ENCODE measurements at regions of chr19 and their contacts with region 1.

Region 1: GRCh38 chr19:42244347-42245220 is 2.2 kb upstream of the GSK3A start:
- DNase-seq: peak; percentile 95
- ATAC-seq: peak; percentile 19
- H3K4me3 Mint-ChIP-seq: peak overlapping the region; percentile 89
- H3K27ac Mint-ChIP-seq: peak overlapping the region; percentile 97
- H3K4me1 Mint-ChIP-seq: peaks cover 35% of the 10 kb centered on the region
- H3K27me3 Mint-ChIP-seq: no peaks in the 10 kb centered on the region
- CTCF ChIP-seq: no peak

Region 2: DNA sequence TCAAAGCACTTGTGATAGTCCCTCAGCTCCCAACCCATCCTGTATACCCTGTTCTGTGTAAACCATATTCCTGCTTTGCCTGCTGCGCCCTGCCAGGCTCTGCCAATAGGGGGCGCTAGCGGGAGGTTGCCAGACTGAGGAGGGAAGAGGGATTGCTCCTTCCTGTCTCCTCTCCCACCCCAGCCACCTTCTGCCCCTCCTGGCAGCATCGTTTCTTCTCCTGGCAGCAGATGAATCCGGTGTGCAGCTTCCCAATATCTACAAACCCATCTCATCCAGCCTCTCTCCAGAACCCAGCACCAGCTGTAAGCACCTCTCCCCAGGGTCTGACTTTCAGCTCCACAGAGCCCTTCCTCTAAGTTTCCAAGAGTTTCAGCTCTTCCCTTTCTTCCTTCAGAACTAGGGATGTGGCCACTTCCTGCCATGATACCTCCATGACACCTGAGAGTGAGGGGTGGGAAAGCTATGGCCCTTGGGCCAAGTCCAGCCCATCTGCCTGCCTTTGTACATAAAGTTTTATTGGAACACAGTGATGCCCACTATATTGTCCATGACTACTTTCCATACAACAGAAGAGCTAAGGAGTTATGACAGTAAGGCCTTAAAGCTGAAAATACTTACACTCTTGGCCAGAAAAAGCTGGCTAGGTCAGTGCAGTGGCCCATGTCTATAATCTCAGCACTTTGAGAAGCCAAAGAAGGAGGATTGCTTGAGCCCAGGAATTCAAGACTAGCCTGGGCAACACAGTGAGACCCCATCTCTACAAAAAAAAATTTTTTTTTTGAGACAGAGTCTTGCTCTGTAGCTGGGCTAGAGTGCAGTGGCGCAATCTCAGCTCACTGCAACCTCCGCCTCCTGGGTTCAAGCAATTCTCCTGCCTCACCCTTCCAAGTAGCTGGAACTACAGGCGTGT is 216.0 kb before region 1 on chr19:
- CTCF ChIA-PET with region 1: no interaction called
- POLR2A ChIA-PET with region 1: no interaction called
- DNase-seq: peak; percentile 93
- ATAC-seq: peak; percentile 79
- H3K4me3 Mint-ChIP-seq: peak overlapping the region; percentile 62
- H3K27ac Mint-ChIP-seq: peak overlapping the region; percentile 17
- H3K4me1 Mint-ChIP-seq: peaks cover 39% of the 10 kb centered on the region
- H3K27me3 Mint-ChIP-seq: no peaks in the 10 kb centered on the region
- CTCF ChIP-seq: peak; percentile 98

Region 3: GRCh38 chr19:42254989-42255765 is 10.6 kb after region 1 on chr19 and contains the start of gene ERF:
- CTCF ChIA-PET with region 1: interaction called, 15 read pairs
- POLR2A ChIA-PET with region 1: interaction called, 13 read pairs
- DNase-seq: peak; percentile 88
- ATAC-seq: peak; percentile 58
- H3K4me3 Mint-ChIP-seq: peak within 1 kb of the TSS; percentile 82
- H3K27ac Mint-ChIP-seq: peak within 1 kb of the TSS; percentile 69; the same call in 1 of the 2 replicates
- H3K4me1 Mint-ChIP-seq: peaks cover 29% of the 10 kb centered on the region
- H3K27me3 Mint-ChIP-seq: peaks cover 20% of the 10 kb centered on the region
- CTCF ChIP-seq: no peak
- total RNA-seq, gene ERF: 65.4 to 67.6 TPM (median 65.9 TPM) in 3 replicates

Region 4: DNA sequence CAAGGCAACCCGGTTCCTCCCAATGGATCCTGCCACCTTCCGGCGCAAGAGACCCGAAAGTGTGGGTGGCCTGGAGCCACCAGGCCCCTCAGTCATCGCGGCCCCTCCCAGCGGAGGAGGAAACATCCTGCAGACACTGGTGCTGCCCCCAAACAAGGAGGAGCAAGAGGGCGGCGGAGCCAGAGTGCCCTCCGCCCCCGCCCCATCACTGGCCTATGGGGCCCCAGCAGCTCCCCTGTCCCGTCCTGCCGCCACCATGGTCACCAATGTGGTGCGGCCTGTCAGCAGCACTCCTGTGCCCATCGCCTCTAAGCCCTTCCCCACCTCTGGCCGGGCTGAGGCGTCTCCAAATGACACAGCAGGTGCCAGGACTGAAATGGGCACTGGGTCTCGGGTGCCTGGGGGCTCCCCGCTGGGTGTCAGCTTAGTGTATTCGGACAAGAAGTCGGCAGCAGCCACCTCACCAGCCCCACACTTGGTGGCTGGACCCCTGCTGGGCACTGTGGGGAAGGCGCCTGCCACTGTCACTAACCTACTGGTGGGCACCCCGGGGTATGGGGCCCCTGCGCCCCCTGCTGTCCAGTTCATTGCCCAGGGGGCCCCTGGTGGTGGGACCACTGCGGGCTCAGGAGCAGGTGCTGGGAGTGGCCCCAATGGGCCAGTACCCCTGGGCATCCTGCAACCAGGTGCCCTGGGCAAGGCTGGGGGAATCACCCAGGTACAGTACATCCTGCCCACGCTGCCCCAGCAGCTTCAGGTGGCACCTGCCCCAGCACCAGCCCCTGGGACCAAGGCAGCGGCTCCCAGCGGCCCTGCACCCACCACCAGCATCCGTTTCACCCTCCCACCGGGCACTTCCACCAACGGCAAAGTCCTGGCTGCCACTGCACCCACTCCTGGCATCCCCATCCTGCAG is 46.2 kb after region 1 on chr19:
- CTCF ChIA-PET with region 1: interaction called, 28 read pairs
- POLR2A ChIA-PET with region 1: interaction called, 3 read pairs
- DNase-seq: no peak
- ATAC-seq: no peak; the same call in 1 of the 2 replicates
- H3K4me3 Mint-ChIP-seq: no peak overlapping the region
- H3K27ac Mint-ChIP-seq: no peak overlapping the region
- H3K4me1 Mint-ChIP-seq: peaks cover 19% of the 10 kb centered on the region
- H3K27me3 Mint-ChIP-seq: no peaks in the 10 kb centered on the region
- CTCF ChIP-seq: peak; percentile 33; the same call in 1 of the 2 replicates

Region 5: DNA sequence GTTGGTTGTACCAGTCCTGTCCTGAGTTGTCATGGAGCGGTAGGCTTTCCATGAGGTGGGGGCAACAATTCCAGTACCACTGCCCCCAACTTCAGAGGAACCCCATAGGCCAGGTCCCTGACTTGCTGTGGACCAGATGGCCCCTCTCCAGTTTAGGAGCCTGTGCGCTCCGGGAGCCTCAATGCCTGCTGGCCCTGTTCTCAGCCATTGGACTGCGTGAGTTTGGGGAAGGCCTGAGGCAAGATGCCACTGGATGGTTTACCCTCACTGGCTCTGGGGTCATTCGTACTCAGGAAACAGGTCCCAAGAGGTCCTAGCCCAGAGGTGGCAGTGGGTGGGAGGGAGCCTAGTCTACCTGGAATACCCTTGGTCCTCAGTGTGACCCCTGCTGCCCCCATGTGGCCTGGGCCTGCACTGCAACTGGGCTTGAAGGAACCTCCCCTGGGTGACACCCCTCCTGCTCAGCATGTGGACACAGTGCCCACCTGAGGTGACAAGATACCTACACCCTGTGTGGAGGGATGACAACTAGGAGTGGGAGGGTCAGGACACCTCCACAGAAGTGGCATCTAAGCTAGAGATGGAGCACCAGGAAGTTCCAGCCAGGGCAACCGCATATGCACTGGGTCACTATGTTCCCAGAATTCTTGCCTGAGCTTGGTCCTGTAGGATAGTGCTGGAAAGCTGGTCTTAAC is 51.4 kb after region 1 on chr19:
- CTCF ChIA-PET with region 1: interaction called, 28 read pairs
- POLR2A ChIA-PET with region 1: interaction called, 3 read pairs
- DNase-seq: peak; percentile 97
- ATAC-seq: peak; percentile 86
- H3K4me3 Mint-ChIP-seq: no peak overlapping the region
- H3K27ac Mint-ChIP-seq: peak overlapping the region; percentile 85
- H3K4me1 Mint-ChIP-seq: peaks cover 16% of the 10 kb centered on the region
- H3K27me3 Mint-ChIP-seq: no peaks in the 10 kb centered on the region
- CTCF ChIP-seq: peak; percentile 96

Region 6: DNA sequence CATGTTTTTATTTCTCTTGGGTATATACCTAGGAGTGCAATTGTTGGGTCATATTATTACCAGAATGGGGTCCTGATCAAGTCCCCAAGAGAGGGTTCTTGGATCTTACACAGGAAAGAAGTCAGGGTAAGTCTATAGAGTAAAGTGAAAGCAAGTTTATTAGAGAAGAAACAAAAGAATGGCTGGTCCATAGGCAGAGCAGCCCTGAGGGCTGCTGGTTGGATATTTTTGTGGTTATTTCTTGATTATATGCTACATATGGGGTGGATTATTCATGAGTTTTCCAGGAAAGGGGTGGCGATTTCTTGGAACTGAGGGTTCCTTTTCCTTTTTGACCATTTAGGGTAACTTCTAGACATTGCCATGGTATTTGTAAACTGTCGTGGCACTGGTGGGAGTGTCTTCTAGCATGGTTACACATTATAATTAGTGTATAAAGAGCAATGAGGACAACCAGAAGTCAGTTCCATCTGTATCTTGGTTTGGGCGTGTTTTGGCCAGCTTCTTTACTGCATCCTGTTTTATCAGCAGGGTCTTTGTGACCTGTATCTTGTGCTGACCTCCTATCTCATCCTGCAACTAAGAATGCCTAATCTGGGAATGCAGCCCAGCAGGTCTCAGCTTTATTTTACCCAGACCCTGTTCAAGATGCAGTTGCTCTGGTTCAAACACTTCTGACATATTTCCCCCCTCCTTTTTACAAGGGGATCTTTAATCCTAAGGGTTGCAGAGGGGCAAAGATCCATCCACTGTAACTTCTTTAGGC is 242.6 kb after region 1 on chr19:
- CTCF ChIA-PET with region 1: no interaction called
- POLR2A ChIA-PET with region 1: no interaction called
- DNase-seq: no peak
- ATAC-seq: no peak
- H3K4me3 Mint-ChIP-seq: no peak overlapping the region
- H3K27ac Mint-ChIP-seq: peak overlapping the region; percentile 51; the same call in 1 of the 2 replicates
- H3K4me1 Mint-ChIP-seq: peaks cover 20% of the 10 kb centered on the region
- H3K27me3 Mint-ChIP-seq: no peaks in the 10 kb centered on the region
- CTCF ChIP-seq: no peak